Heart left ventricle (tissue), 16 donors: ENCODE measurements at regions of chr19 and their contacts with region 1.

Region 1: GRCh38 chr19:9785367-9786331 is 17.1 kb upstream of the ZNF846 start:
- DNase-seq: peak; percentile 98 to 99 (median 98)
- ATAC-seq: peak; percentile 92 to 96 (median 94)
- H3K4me3 ChIP-seq: peak overlapping the region; percentile 42 to 92 (median 66)
- H3K27ac ChIP-seq: peak overlapping the region; percentile 52 to 100 (median 96)
- H3K4me1 ChIP-seq: peaks cover 0 to 26% (median 11%) of the 10 kb centered on the region in 12 donors
- H3K27me3 ChIP-seq: no peaks in the 10 kb centered on the region
- CTCF ChIP-seq: no peak
- POLR2A ChIP-seq: peak in 1 of 2 donors; percentile 87

Region 2: GRCh38 chr19:9636018-9636417 is 149.6 kb before region 1 on chr19:
- intact Hi-C with region 1: no loop called
- DNase-seq: no peak
- ATAC-seq: no peak
- H3K4me3 ChIP-seq: no peak overlapping the region
- H3K27ac ChIP-seq: no peak overlapping the region
- H3K4me1 ChIP-seq: no peaks in the 10 kb centered on the region
- H3K27me3 ChIP-seq: no peaks in the 10 kb centered on the region
- CTCF ChIP-seq: no peak
- POLR2A ChIP-seq: no peak

Region 3: DNA sequence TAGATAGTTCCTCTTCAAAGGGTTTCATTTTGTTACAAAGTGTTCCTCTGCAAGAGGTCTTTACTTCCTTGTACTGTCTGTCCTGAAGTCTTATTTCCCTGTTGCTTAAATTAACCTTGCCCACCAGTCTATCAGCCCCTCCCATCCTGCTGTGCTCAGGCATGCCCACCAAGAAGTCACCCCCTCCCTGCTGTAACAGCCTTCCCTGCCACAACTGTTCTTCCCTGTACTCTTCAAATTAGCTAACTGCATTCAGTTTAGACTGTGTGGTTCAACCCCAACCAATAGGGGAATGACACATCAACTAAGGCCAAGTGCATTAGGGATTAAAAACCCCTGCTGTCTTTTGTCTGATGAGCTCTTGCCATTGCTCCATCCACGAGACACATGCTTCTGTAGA is 76.3 kb before region 1 on chr19:
- intact Hi-C with region 1: no loop called
- DNase-seq: peak in 1 of 5 donors; percentile 31
- ATAC-seq: peak; percentile 58 to 84 (median 62)
- H3K4me3 ChIP-seq: no peak overlapping the region
- H3K27ac ChIP-seq: peak overlapping the region in 2 of 12 donors; percentile 37 to 75
- H3K4me1 ChIP-seq: no peaks in the 10 kb centered on the region
- H3K27me3 ChIP-seq: no peaks in the 10 kb centered on the region
- CTCF ChIP-seq: no peak
- POLR2A ChIP-seq: no peak

Region 4: GRCh38 chr19:9768175-9769112 is 17.2 kb before region 1 on chr19 and contains the start of gene ZNF846:
- intact Hi-C with region 1: loop called in 4 of 10 experiments (anchors 2 kb)
- DNase-seq: peak; percentile 92 to 96 (median 95)
- ATAC-seq: peak; percentile 97 to 100 (median 99)
- H3K4me3 ChIP-seq: peak within 1 kb of the TSS; percentile 57 to 91 (median 78)
- H3K27ac ChIP-seq: peak within 1 kb of the TSS; percentile 89 to 98 (median 92)
- H3K4me1 ChIP-seq: peaks cover 0 to 20% (median 15%) of the 10 kb centered on the region in 12 donors
- H3K27me3 ChIP-seq: no peaks in the 10 kb centered on the region
- CTCF ChIP-seq: no peak
- POLR2A ChIP-seq: peak in 1 of 2 donors; percentile 62
- total RNA-seq, gene ZNF846: 6.5 to 11.0 (median 8.4) TPM

Region 5: DNA sequence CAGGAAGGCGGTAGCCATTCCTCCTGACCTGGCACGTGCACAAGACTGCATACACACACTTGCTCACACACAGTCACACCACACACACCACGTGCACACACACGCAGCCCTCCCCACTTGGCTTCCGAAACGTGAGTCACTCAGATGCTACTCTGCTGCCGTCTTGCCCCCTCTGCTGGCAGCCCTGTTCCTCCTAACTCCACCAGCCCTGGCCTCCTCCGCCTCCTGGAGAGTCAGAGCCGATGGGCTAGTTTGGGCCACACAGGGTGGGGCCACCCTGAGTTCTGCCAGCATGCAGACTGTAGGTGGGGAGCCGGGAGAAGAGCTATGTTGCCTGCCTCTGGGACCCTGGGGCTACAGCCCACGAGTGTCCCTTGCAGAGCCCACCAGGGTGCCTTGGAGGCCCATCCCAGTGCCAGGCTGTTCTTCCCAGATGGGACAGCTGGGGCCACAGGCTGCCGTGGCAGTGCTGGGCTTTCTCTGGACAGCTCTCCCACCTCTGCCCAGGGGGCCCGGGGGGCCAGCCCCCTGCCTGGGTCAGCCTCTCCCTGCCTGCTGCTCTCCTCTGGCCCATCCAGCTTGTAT is 61.5 kb after region 1 on chr19:
- intact Hi-C with region 1: no loop called
- DNase-seq: peak in 2 of 5 donors; percentile 50 to 51
- ATAC-seq: peak in 3 of 4 donors; percentile 48 to 64 (median 48)
- H3K4me3 ChIP-seq: no peak overlapping the region
- H3K27ac ChIP-seq: peak overlapping the region in 1 of 12 donors; percentile 36
- H3K4me1 ChIP-seq: peaks cover 0 to 20% (median 0%) of the 10 kb centered on the region in 12 donors
- H3K27me3 ChIP-seq: no peaks in the 10 kb centered on the region
- CTCF ChIP-seq: peak in 7 of 12 donors; percentile 8 to 40 (median 32)
- POLR2A ChIP-seq: no peak